ENCODE measurements at regions of chr5 and their contacts with region 1.

Region 1: GRCh38 chr5:115544436-115545350 is at the start of gene FEM1C:
- DNase-seq: peak; percentile 90 to 97
- H3K4me3 ChIP-seq: peak within 1 kb of the TSS; percentile 89
- H3K27ac ChIP-seq: peak within 1 kb of the TSS; percentile 89
- H3K4me1 ChIP-seq: peaks cover 19% of the 10 kb centered on the region
- H3K27me3 ChIP-seq: no peaks in the 10 kb centered on the region
- CTCF ChIP-seq: no peak
- total RNA-seq, gene FEM1C: 11.3 and 15.9 TPM in 2 replicates

Region 2: GRCh38 chr5:115321309-115321708 is 223.4 kb before region 1 on chr5:
- CTCF ChIA-PET with region 1: interaction called, 13 read pairs
- POLR2A ChIA-PET with region 1: interaction called, 5 read pairs
- intact Hi-C with region 1: no loop called
- DNase-seq: peak; percentile 11 to 37
- H3K4me3 ChIP-seq: no peak overlapping the region
- H3K27ac ChIP-seq: no peak overlapping the region
- H3K4me1 ChIP-seq: 0 out of 2 replicates have a peak, but pooled peaks cover 5% of the 10 kb centered on the region
- H3K27me3 ChIP-seq: no peaks in the 10 kb centered on the region
- CTCF ChIP-seq: no peak

Region 3: GRCh38 chr5:115377468-115378217 is 167.1 kb before region 1 on chr5:
- CTCF ChIA-PET with region 1: no interaction called
- POLR2A ChIA-PET with region 1: no interaction called
- intact Hi-C with region 1: loop called (anchors 1 kb)
- DNase-seq: peak in 1 of 2 experiments; percentile 81
- H3K4me3 ChIP-seq: no peak overlapping the region
- H3K27ac ChIP-seq: peak overlapping the region; percentile 94
- H3K4me1 ChIP-seq: peaks cover 51% of the 10 kb centered on the region
- H3K27me3 ChIP-seq: no peaks in the 10 kb centered on the region
- CTCF ChIP-seq: no peak

Region 4: GRCh38 chr5:115415143-115415491 is 129.6 kb before region 1 on chr5:
- CTCF ChIA-PET with region 1: interaction called, 7 read pairs
- POLR2A ChIA-PET with region 1: no interaction called
- intact Hi-C with region 1: loop called (anchors 2 kb)
- DNase-seq: peak; percentile 56 to 88
- H3K4me3 ChIP-seq: no peak overlapping the region
- H3K27ac ChIP-seq: peak overlapping the region; percentile 69
- H3K4me1 ChIP-seq: peaks cover 36% of the 10 kb centered on the region
- H3K27me3 ChIP-seq: no peaks in the 10 kb centered on the region
- CTCF ChIP-seq: no peak

Region 5: DNA sequence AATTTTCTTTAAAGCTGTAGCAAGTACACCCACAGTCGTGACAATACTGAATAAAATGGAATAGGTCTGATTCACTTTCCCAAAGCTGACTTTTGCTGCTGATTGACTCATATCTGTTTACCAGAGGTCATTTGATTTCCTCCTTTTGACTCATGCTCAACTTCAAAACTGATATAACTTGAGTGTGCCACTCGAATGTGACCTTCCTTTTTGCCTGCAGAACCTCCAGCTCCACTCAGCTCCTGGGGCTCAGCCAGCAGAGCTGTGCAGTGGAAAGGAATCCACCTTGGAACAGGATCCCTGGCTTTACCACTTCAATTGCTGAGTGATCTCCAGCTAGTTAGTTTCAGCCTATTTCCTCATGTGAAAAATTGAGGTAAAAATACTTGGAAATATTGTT is 84.2 kb before region 1 on chr5:
- CTCF ChIA-PET with region 1: no interaction called
- POLR2A ChIA-PET with region 1: no interaction called
- intact Hi-C with region 1: loop called (anchors 5 kb)
- DNase-seq: peak; percentile 69 to 93
- H3K4me3 ChIP-seq: 0 out of 2 replicates have a peak overlapping the region, but pooled peaks have one; percentile 8
- H3K27ac ChIP-seq: peak overlapping the region; percentile 94
- H3K4me1 ChIP-seq: peaks cover 55% of the 10 kb centered on the region
- H3K27me3 ChIP-seq: no peaks in the 10 kb centered on the region
- CTCF ChIP-seq: no peak

Region 6: GRCh38 chr5:115494570-115495289 is 50.0 kb before region 1 on chr5:
- CTCF ChIA-PET with region 1: interaction called, 16 read pairs
- POLR2A ChIA-PET with region 1: interaction called, 4 read pairs
- intact Hi-C with region 1: no loop called
- DNase-seq: no peak
- H3K4me3 ChIP-seq: no peak overlapping the region
- H3K27ac ChIP-seq: no peak overlapping the region
- H3K4me1 ChIP-seq: no peaks in the 10 kb centered on the region
- H3K27me3 ChIP-seq: no peaks in the 10 kb centered on the region
- CTCF ChIP-seq: no peak

Region 7: DNA sequence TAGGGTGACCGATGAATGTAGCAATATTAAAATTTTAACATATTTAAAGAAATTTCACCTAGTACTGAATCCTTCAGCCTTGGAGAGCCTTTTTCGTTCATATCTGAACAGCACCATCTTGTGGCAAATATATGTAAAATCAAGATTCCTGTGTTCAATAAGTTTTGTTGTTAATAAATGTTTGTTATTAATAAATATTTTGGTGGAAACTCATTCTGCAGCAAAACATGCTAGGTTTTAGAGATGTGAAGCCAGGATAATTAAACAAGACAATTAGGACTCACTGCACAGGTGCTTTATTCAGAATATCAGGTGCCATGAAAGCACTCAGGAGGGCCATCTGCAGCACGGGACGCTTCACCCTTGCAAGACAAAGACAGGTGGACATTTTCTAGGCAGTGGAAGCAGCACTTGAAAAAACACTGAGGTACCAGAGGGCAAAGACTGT is 41.9 kb after region 1 on chr5:
- CTCF ChIA-PET with region 1: no interaction called
- POLR2A ChIA-PET with region 1: interaction called, 4 read pairs
- intact Hi-C with region 1: loop called (anchors 1 kb)
- DNase-seq: no peak
- H3K4me3 ChIP-seq: no peak overlapping the region
- H3K27ac ChIP-seq: no peak overlapping the region
- H3K4me1 ChIP-seq: peaks cover 10% of the 10 kb centered on the region; the same call in 1 of the 2 replicates
- H3K27me3 ChIP-seq: no peaks in the 10 kb centered on the region
- CTCF ChIP-seq: peak; percentile 82

Measured in PC-9 (cell line).